Left colon (tissue), 2 donors: ENCODE measurements at regions of chr3 and their contacts with region 1.

Region 1: GRCh38 chr3:25648107-25648535 is 16.6 kb downstream of the TOP2B start:
- DNase-seq: peak; percentile 45 to 87
- ATAC-seq: peak; percentile 97

Region 2: DNA sequence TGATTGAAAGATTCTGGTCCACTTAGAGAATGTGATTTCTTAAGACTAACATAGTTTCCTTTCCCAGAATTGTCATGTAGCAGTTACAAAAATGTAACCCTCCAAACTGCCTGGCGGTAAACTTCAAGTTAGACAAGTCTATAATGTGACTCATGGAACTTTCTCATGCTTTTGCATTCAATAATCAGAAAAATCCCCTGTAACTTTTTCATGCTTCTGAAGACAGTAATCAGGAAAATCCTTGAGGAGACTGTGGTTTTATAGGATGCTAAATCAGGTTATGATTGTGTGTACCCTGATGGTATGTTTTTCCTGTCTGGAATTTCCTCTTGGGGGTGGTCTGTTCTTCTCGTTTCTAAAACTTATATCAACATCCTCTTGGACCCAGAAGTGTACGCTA is 294.1 kb before region 1 on chr3:
- intact Hi-C with region 1: no loop called
- DNase-seq: no peak
- ATAC-seq: no peak

Region 3: GRCh38 chr3:25831578-25831977 is 183.5 kb after region 1 on chr3:
- intact Hi-C with region 1: no loop called
- DNase-seq: no peak
- ATAC-seq: peak; percentile 37

Region 4: DNA sequence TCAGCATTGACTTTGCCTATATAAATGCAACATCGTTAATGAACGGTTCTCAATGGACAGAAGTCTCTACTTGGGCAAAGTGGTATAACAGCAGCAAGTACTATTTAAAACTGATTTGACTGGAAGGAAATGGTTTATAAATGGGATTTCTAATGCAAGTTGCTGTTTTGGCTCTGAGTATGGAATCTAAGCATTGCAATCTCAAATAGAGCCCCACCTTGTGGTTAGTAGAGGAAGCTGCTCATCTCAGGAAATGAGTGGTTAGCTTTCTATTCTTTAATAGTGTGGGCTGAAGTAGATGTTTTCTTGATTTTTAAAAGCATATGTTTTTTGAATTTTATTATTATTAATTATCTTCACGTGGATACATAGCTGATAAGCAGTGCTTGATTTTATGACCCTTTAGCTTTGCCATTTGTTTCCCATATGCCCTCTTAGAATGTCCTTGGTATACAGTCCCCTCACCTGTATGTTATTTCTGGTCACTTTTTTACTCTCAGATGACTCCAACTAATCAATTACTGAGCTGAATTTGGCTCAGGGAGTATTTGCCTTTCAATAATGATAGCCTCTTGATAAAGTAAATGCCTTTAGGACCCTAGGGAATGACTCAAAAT is 208.9 kb after region 1 on chr3:
- intact Hi-C with region 1: loop called in 1 of 2 experiments (anchors 10 kb)
- DNase-seq: no peak
- ATAC-seq: peak; percentile 66